ENCODE measurements at regions of chr2 and their contacts with region 1.

Region 1: DNA sequence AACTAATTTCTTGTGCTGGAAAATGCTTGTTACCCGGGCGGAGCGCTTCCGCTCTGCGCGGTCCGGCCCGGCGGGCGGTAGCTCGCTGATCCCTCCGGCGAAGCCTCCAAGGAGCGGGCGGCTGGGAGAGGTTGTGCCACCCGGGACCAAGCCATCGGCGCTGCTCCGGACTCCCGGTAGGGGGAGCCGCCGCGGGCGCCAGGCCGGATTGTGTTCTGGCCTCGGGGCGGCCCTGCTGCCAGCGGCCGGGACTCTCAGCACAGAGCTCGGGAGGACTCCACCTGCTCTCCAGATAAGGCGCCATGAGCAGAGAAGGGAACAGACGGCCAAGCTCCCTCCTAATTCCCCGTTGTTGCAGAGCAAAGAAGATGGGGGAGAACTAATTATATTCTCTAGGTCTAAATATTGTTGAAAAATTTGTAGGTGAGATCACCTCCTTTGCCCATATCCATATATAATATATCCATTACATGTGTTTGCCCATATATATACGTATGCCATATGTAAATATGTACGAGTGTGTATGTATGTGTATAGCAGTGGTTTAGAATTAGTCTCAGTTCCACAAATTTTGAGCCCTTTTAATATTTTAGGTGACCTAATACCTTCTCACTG is 13.8 kb upstream of the SATB2 start:
- DNase-seq: peak in 1 of 2 experiments; percentile 94
- H3K4me3 ChIP-seq: peak overlapping the region; percentile 29 to 60 (median 40); a peak in 7 of 8 replicates
- H3K27ac ChIP-seq: no peak overlapping the region
- H3K4me1 ChIP-seq: peaks cover 8 to 23% (median 14%) of the 10 kb centered on the region in 4 experiments
- H3K27me3 ChIP-seq: peaks cover 41 to 61% (median 57%) of the 10 kb centered on the region in 4 experiments
- CTCF ChIP-seq: peak in 2 of 3 experiments; percentile 81 to 93; a peak in 3 of 4 replicates
- EP300 ChIP-seq: 0 out of 3 replicates have a peak, but pooled peaks of 1 of the 2 experiments have one; percentile 23
- POLR2A ChIP-seq: no peak
- RAD21 ChIP-seq: peak; percentile 54 to 70

Region 2: GRCh38 chr2:199452205-199452990 is 19.2 kb before region 1 on chr2:
- CTCF ChIA-PET with region 1: interaction called, 13 read pairs
- POLR2A ChIA-PET with region 1: interaction called, 32 read pairs
- DNase-seq: no peak
- H3K4me3 ChIP-seq: no peak overlapping the region
- H3K27ac ChIP-seq: no peak overlapping the region
- H3K4me1 ChIP-seq: peaks cover under 1 to 10% (median 5%) of the 10 kb centered on the region in 4 experiments; a peak in 6 of 7 replicates
- H3K27me3 ChIP-seq: peaks cover 5 to 23% (median 14%) of the 10 kb centered on the region in 4 experiments; a peak in 6 of 7 replicates
- CTCF ChIP-seq: no peak
- EP300 ChIP-seq: no peak
- POLR2A ChIP-seq: no peak
- RAD21 ChIP-seq: no peak

Region 3: GRCh38 chr2:199459286-199460016 is 12.1 kb before region 1 on chr2:
- CTCF ChIA-PET with region 1: interaction called, 298 read pairs
- POLR2A ChIA-PET with region 1: interaction called, 32 read pairs
- DNase-seq: peak; percentile 82 to 92
- H3K4me3 ChIP-seq: peak overlapping the region; percentile 60 to 73 (median 64)
- H3K27ac ChIP-seq: no peak overlapping the region
- H3K4me1 ChIP-seq: peaks cover 0 to 26% (median 10%) of the 10 kb centered on the region in 4 experiments; a peak in 6 of 7 replicates
- H3K27me3 ChIP-seq: peaks cover 21 to 76% (median 52%) of the 10 kb centered on the region in 4 experiments; a peak in 6 of 7 replicates
- CTCF ChIP-seq: no peak
- EP300 ChIP-seq: no peak
- POLR2A ChIP-seq: no peak; a peak in 1 of 3 replicates
- RAD21 ChIP-seq: no peak; a peak in 1 of 4 replicates

Measured in H1 (cell line).